A549 (cell line): ENCODE measurements at regions of chr18 and their contacts with region 1.

Region 1: DNA sequence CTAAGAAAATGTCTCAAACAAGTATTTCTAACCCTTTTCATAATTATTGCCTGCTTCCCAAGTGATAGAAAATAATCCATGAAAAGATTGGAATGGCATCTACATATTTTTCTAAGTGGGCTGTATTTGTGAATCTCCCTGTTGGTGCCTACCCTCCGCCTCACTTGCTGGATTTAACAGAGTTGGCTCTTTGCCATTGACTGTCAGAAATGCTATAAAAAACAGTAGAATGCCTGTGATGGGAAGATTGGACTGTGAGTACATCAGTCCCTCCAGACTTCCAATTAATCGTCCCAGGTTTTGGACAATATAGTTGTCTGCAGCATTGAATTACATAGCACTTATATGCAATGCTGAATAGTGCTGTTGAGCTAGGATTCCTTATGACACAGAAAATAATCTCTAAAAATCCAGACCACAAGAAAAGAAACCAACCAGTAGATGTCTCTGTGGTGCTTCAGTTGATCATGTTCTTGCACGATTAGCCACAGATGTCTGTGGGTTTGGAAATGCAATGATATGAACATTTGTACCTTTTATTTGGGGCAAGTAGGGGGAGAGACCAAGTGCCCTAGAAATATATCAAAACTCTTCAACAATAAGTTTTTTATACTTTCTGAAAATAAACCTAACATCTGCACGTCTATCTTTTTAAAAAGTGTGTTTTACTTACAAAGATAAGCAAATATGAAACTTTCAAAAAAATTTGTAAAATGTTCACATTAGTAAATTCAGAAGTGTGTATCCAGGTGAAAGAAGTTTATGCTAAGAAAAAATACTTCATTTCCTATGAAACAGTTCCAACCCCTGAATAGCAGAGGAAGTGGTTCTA is 88.5 kb downstream of the DYNAP start:
- DNase-seq: peak; percentile 47 to 78
- ATAC-seq: peak; percentile 74 to 86; a peak in 5 of 6 replicates
- H3K4me3 ChIP-seq: no peak overlapping the region
- H3K27ac ChIP-seq: peak overlapping the region; percentile 72 to 86
- H3K4me1 ChIP-seq: peaks cover 12% of the 10 kb centered on the region; the same call in 2 of the 3 replicates
- CTCF ChIP-seq: peak; percentile 68
- EP300 ChIP-seq: no peak
- POLR2A ChIP-seq: no peak
- RAD21 ChIP-seq: peak; percentile 90 to 92

Region 2: GRCh38 chr18:54392543-54393023 is 287.0 kb before region 1 on chr18:
- CTCF ChIA-PET with region 1: no interaction called
- POLR2A ChIA-PET with region 1: no interaction called
- DNase-seq: peak; percentile 11 to 52
- ATAC-seq: peak; percentile 58 to 80; a peak in 5 of 6 replicates
- H3K4me3 ChIP-seq: no peak overlapping the region
- H3K27ac ChIP-seq: no peak overlapping the region
- H3K4me1 ChIP-seq: peaks cover 13% of the 10 kb centered on the region; the same call in 2 of the 3 replicates
- CTCF ChIP-seq: peak; percentile 57
- EP300 ChIP-seq: no peak
- POLR2A ChIP-seq: no peak
- RAD21 ChIP-seq: peak; percentile 54 to 56

Region 3: DNA sequence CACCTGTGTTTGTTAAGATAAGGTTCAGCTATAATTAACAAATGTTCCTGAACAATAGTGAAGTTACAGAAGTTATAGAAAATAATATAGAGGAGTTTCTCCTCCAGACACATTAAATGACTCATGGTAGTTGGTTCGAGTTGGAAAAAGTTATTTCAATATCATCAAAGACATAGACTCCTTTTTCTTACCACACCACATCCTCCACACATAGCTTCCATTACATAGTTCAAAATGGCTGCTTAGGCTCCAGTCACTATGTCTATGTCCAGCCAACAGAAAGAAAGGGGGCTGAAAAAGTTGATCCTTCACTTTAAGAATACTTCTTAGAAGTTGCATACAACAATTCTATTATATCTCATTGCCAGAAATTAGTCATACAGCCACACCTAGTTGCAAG is 37.8 kb before region 1 on chr18:
- CTCF ChIA-PET with region 1: no interaction called
- POLR2A ChIA-PET with region 1: no interaction called
- DNase-seq: no peak
- ATAC-seq: no peak
- H3K4me3 ChIP-seq: no peak overlapping the region
- H3K27ac ChIP-seq: no peak overlapping the region
- H3K4me1 ChIP-seq: no peaks in the 10 kb centered on the region
- CTCF ChIP-seq: no peak
- EP300 ChIP-seq: no peak
- POLR2A ChIP-seq: no peak
- RAD21 ChIP-seq: no peak

Region 4: DNA sequence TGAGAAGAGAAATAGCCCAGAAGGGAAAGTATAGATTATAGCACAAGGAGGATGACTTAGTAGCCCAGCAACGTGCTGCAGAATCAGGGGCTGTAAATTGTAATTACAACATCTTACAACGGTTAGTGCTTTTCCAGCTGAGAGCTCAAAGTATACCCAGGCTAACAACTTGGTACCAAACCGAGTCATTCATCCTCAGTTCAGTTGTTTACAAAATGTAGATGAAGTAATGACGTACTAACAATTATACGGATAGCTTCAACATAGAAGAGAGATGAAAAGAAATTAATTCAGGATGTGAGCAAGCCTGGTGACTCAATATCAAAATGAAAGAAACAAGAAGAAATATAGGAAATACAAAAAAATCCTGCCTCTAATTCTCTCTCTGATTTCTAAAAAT is 10.7 kb after region 1 on chr18:
- CTCF ChIA-PET with region 1: interaction called, 12 read pairs
- POLR2A ChIA-PET with region 1: no interaction called
- DNase-seq: no peak
- ATAC-seq: no peak
- H3K4me3 ChIP-seq: no peak overlapping the region
- H3K27ac ChIP-seq: no peak overlapping the region
- H3K4me1 ChIP-seq: no peaks in the 10 kb centered on the region
- CTCF ChIP-seq: no peak
- EP300 ChIP-seq: no peak
- POLR2A ChIP-seq: no peak
- RAD21 ChIP-seq: no peak

Region 5: DNA sequence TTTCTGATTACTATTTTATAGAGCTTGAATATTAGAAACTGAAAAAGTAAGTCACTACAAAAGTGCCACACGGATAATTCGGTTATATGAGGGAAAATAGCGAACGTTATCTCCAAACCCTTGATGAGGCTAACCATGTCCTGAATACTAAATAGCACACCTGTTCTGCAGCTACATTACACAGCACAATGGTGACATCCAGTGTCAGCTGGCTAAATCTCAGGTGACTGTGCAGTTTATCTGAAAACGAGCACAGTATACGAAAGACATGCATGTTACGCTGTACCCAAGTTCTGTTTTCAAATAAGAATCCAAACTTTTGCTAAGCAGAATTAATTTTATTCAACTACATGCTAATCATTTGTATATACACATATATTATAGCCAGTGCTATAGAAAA is 270.7 kb after region 1 on chr18:
- CTCF ChIA-PET with region 1: interaction called, 10 read pairs
- POLR2A ChIA-PET with region 1: no interaction called
- DNase-seq: no peak
- ATAC-seq: no peak
- H3K4me3 ChIP-seq: no peak overlapping the region
- H3K27ac ChIP-seq: no peak overlapping the region
- H3K4me1 ChIP-seq: peaks cover 41% of the 10 kb centered on the region
- CTCF ChIP-seq: peak; percentile 19; the same call in 1 of the 3 replicates
- EP300 ChIP-seq: no peak
- POLR2A ChIP-seq: no peak
- RAD21 ChIP-seq: peak; percentile 41 to 54; a peak in 4 of 5 replicates